A673 (cell line): ENCODE measurements at regions of chr11 and their contacts with region 1.

Region 1: GRCh38 chr11:115716080-115716479 is 211.9 kb upstream of the CADM1 start:
- DNase-seq: no peak
- H3K4me3 ChIP-seq: no peak overlapping the region
- H3K27ac ChIP-seq: no peak overlapping the region
- H3K4me1 ChIP-seq: peaks cover 7% of the 10 kb centered on the region
- H3K27me3 ChIP-seq: no peaks in the 10 kb centered on the region
- CTCF ChIP-seq: no peak

Region 2: DNA sequence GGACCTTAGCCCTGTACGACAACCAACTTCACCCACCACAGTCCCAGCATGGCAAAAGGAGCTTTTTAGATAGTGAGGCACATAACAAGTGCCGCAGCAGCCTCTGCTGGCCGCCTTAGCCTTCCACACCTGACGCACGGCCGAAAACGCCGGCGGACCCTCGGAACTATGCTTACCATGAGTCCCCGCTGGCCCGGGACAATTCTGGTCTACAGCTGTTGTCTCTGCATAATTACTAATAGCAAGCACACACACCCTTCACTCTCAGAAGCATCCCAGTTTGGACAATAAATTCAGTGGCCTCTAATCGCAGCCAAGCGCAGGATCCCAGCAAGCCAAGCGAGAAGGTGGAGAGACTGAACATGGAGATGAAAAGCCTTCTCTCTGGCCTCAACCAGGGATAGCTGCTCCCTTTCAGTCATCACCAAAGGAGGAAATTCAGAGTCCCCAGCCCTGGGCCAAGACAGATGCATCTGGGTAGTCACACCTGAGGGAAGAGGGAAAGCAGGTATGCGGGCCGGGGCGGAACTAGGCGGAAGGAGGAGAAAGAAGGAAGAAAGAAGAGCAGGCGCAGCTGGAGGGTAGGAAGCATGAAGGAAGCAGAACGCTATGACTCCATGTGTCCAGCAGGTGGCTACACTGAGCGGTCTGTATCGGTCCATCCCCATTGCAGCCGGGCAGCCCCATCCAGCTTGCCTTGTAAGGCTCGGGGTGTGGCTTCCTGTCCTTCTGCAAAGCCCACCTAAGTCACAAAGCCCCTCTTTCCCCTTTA is 1016.4 kb after region 1 on chr11:
- CTCF ChIA-PET with region 1: interaction called, 10 read pairs
- POLR2A ChIA-PET with region 1: no interaction called
- intact Hi-C with region 1: no loop called
- DNase-seq: peak; percentile 83
- H3K4me3 ChIP-seq: no peak overlapping the region
- H3K27ac ChIP-seq: no peak overlapping the region
- H3K4me1 ChIP-seq: no peaks in the 10 kb centered on the region
- H3K27me3 ChIP-seq: peaks cover 7% of the 10 kb centered on the region
- CTCF ChIP-seq: peak; percentile 88